GM18951 (cell line): ENCODE measurements at regions of chr10 and their contacts with region 1.

Region 1: GRCh38 chr10:96642973-96643372 is 56.2 kb upstream of the TM9SF3 start:
- POLR2A ChIP-seq: no peak

Region 2: GRCh38 chr10:95935429-95935828 is 707.5 kb before region 1 on chr10:
- in situ Hi-C with region 1: no loop called
- POLR2A ChIP-seq: no peak

Region 3: DNA sequence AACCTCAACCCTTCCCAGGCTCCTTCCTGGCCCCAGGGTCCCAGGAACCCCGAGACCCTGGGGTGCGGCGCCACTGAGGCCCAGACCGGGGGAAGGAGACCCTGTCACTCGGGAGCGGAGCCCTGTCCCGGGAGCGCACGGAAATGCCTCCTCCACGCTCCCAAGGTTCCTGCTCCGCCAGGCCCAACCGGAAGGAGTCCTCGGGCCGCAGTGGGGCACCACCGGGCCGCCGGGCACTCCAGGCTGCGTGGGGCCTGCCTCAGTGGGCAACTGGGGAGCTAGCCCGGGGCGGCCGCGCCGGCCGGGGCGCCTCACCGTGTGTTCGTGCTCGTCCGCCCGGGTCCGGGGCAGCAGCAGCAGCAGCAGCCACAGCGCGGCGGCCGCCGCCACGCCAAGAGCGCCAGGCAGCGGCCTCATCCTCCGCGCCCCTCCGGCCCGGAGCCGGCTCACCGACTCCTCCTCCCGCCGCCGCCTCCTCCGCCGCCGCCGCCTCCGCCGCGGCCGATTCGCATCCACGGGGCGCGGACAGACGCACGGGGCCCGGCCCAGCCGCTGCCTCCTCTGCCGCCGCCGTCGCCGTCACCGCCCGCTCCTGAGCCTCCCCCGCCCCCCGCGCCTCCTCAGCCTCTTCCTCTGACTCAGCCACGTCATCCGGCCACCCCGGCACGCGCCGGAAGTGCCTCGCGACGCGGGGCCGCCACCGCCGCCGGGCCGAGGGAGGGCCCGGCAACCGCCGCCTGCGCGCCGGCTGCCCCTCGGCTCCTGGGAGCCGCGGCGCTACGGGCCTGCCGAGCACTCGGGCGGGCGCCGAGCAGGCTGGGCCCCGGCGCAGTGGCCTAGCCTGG is 56.3 kb before region 1 on chr10 and contains the start of gene TM9SF3:
- in situ Hi-C with region 1: no loop called
- POLR2A ChIP-seq: peak; percentile 97

Region 4: GRCh38 chr10:96743988-96744585 is 101.1 kb after region 1 on chr10:
- in situ Hi-C with region 1: loop called (anchors 10 kb)
- POLR2A ChIP-seq: no peak

Region 5: GRCh38 chr10:96826438-96826837 is 183.5 kb after region 1 on chr10:
- in situ Hi-C with region 1: loop called (anchors 10 kb)
- POLR2A ChIP-seq: no peak